MCF 10A (cell line): ENCODE measurements at regions of chr13 and their contacts with region 1.

Region 1: GRCh38 chr13:39887387-39887786 is 231.9 kb downstream of the COG6 start:
- DNase-seq: no peak
- H3K4me3 Mint-ChIP-seq: no peak overlapping the region
- H3K27ac Mint-ChIP-seq: no peak overlapping the region
- H3K4me1 Mint-ChIP-seq: no peaks in the 10 kb centered on the region
- H3K27me3 Mint-ChIP-seq: no peaks in the 10 kb centered on the region
- CTCF ChIP-seq: no peak

Region 2: GRCh38 chr13:39835253-39835652 is 52.1 kb before region 1 on chr13:
- CTCF ChIA-PET with region 1: interaction called, 10 read pairs
- POLR2A ChIA-PET with region 1: no interaction called
- intact Hi-C with region 1: no loop called
- DNase-seq: peak; percentile 4
- H3K4me3 Mint-ChIP-seq: no peak overlapping the region
- H3K27ac Mint-ChIP-seq: no peak overlapping the region
- H3K4me1 Mint-ChIP-seq: no peaks in the 10 kb centered on the region
- H3K27me3 Mint-ChIP-seq: no peaks in the 10 kb centered on the region
- CTCF ChIP-seq: no peak